Cardiac septum (tissue), 1 donor: ENCODE measurements at regions of chr3 and their contacts with region 1.

Region 1: DNA sequence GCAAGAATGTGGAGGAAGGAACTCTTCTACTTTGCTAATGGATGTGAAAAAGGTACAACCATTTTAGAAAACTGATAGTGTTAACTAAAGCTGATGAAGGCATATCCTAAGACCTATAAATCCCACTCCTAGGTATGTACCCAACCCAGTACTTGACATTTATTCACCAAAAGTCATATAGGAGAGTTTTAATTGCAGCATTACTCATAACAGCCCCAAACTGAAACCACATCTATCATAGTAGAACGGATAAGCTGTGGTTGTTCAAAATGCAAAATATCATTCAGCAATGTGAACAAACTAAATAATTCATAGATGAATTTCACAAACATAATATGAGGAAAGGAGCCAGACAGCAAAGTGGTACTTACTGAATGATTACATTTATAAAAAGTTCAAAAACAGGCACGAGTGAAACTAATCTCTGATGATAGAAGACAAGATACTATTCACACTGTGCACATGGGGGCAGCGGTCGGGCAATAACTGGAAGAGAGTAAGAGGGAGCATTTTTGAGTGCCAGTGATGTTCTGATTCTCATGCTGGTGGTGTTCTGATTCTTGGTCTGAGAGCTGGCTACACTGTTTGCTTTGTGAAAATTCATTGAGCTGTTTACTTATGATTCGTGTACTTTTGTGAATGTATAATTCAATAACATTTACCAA is 34.3 kb downstream of the GOLIM4 start:
- DNase-seq: no peak

Region 2: GRCh38 chr3:167852216-167852615 is 209.2 kb before region 1 on chr3:
- intact Hi-C with region 1: no loop called
- DNase-seq: no peak

Region 3: DNA sequence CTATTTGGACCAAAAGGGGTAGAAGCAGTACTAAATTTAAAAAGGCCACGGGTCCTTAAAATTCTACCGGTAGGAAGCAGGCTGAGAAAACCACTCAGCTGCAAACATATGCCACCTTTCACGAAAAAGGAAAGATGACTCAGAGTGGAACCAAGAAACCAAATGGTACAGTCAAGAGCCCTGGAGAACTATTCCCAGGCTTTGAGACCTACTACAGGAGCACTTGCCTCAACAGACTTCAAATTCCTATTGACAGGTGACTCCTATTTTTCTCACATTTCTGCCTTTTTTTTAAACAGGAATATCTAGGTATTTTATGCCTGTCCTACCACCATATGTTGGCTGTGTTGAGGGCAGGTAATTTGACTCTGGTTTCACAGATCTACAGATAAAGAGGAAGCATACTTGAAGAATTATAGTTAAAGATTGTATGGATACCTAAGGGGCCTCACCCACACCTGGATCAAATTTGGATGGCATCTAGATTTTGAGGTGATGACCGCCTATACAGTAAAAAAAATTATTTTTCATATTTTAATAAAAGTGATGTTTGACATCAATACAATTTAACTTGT is 24.2 kb after region 1 on chr3:
- intact Hi-C with region 1: loop called (anchors 2 kb)
- DNase-seq: no peak